ENCODE measurements at regions of chr4 and their contacts with region 1.

Region 1: DNA sequence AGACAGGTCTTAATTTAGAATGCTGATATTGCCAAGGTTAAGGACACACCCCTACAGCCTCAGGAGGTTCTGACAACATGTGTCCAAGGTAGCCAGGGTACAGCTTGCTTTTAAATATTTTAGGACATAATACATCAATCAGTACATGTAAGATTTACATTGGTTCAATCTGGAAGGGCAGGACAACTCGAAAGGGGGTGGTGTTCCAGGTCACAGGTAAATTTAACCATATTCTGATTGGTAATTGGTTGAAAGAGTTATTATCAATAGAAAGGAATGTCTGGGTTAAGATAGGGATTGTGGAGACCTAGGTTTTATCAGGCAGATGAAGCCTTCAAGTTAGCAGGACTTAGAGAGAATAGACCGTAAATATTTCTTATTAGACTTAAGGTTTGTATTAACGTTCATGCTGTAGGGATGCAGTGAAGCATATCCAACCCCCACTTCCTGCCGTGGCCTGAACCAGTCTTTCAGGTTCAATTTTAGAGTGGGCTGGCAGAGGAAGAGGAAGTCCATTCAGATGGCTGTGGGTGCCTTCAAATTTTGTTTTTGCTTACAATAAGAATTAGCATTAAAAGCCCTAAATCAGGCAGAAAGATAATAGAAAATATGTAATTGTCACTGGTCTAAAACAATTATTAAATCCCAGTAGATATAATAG is 136.5 kb upstream of the GALNTL6 start:
- DNase-seq: no peak
- ATAC-seq: peak; percentile 99
- H3K4me3 Mint-ChIP-seq: peak overlapping the region; percentile 52
- H3K27ac Mint-ChIP-seq: peak overlapping the region; percentile 22
- H3K4me1 Mint-ChIP-seq: peaks cover 29% of the 10 kb centered on the region
- H3K27me3 Mint-ChIP-seq: no peaks in the 10 kb centered on the region
- CTCF ChIP-seq: no peak

Region 2: GRCh38 chr4:171644430-171645057 is 32.1 kb before region 1 on chr4:
- CTCF ChIA-PET with region 1: no interaction called
- POLR2A ChIA-PET with region 1: no interaction called
- intact Hi-C with region 1: loop called (anchors 2 kb)
- DNase-seq: no peak
- ATAC-seq: peak; percentile 58
- H3K4me3 Mint-ChIP-seq: peak overlapping the region; percentile 54
- H3K27ac Mint-ChIP-seq: peak overlapping the region; percentile 25
- H3K4me1 Mint-ChIP-seq: peaks cover 30% of the 10 kb centered on the region
- H3K27me3 Mint-ChIP-seq: no peaks in the 10 kb centered on the region
- CTCF ChIP-seq: no peak

Region 3: GRCh38 chr4:171710743-171711142 is 34.1 kb after region 1 on chr4:
- CTCF ChIA-PET with region 1: no interaction called
- POLR2A ChIA-PET with region 1: no interaction called
- intact Hi-C with region 1: no loop called
- DNase-seq: no peak
- ATAC-seq: no peak
- H3K4me3 Mint-ChIP-seq: no peak overlapping the region
- H3K27ac Mint-ChIP-seq: no peak overlapping the region
- H3K4me1 Mint-ChIP-seq: no peaks in the 10 kb centered on the region
- H3K27me3 Mint-ChIP-seq: peaks cover 2% of the 10 kb centered on the region
- CTCF ChIP-seq: no peak